ENCODE measurements at regions of chr20 and their contacts with region 1.

Region 1: GRCh38 chr20:62010551-62011402 is 54.9 kb downstream of the TAF4 start:
- DNase-seq: peak; percentile 63 to 70 (median 68)
- H3K4me3 ChIP-seq: no peak overlapping the region
- H3K4me3 Mint-ChIP-seq: peak overlapping the region in 1 of 8 donors; percentile 3
- H3K27ac ChIP-seq: no peak overlapping the region
- H3K27ac Mint-ChIP-seq: peak overlapping the region in 5 of 7 donors; percentile 4 to 76 (median 51)
- H3K4me1 ChIP-seq: no peaks in the 10 kb centered on the region
- H3K4me1 Mint-ChIP-seq: peaks cover 7 to 14% (median 9%) of the 10 kb centered on the region in 4 donors
- H3K27me3 ChIP-seq: no peaks in the 10 kb centered on the region
- H3K27me3 Mint-ChIP-seq: no peaks in the 10 kb centered on the region

Region 2: DNA sequence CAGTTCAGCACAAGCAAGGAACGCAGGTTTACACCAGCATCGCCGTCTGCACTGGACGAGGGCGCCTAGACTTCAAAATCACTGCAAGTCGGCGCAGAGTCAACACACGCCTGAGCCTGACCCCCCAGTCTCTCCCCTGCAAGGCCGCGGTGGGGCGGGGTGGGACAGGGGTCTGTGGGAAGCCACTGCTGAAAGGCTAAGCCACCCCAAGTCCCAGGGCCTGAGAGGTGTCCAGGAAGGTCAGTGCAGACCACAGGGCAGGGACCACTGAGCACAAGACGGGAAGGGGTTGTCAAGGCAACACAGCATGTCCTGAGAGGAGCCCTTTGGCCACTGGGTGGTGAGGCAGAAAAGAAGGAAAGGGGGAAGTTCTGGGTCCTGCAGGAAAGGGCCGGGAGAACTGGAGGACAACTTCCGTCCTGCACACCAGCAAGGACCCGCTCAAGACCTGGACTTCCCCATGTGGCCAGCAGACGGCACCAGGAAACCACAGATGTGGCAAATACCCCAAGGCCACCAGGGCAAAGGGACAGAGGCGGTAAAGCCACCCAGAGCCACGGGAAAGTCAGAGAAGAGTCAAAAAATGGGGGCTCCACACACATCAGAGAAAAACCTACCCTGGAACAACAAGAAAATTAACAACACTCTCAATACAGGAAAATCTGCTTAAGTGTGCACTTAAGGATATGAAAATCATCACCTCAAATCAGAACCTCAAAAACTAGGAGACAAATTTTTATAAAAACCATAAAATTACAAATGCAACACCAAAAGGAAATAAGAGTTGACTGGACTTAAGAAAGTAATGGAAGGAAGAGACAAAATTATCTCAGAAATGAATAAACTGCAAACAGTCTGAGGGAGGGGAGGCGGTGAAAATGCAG is 29.8 kb before region 1 on chr20:
- CTCF ChIA-PET with region 1: no interaction called
- POLR2A ChIA-PET with region 1: no interaction called
- intact Hi-C with region 1: no loop called
- DNase-seq: no peak
- H3K4me3 ChIP-seq: no peak overlapping the region
- H3K4me3 Mint-ChIP-seq: peak overlapping the region in 2 of 8 donors; percentile 44 to 67
- H3K27ac ChIP-seq: no peak overlapping the region
- H3K27ac Mint-ChIP-seq: peak overlapping the region in 3 of 7 donors; percentile 35 to 75 (median 42)
- H3K4me1 ChIP-seq: no peaks in the 10 kb centered on the region
- H3K4me1 Mint-ChIP-seq: peaks cover 8 to 38% (median 18%) of the 10 kb centered on the region in 4 donors
- H3K27me3 ChIP-seq: no peaks in the 10 kb centered on the region
- H3K27me3 Mint-ChIP-seq: no peaks in the 10 kb centered on the region

Region 3: GRCh38 chr20:61998343-61999121 is 12.2 kb before region 1 on chr20:
- CTCF ChIA-PET with region 1: no interaction called
- POLR2A ChIA-PET with region 1: no interaction called
- intact Hi-C with region 1: no loop called
- DNase-seq: no peak
- H3K4me3 ChIP-seq: no peak overlapping the region
- H3K4me3 Mint-ChIP-seq: no peak overlapping the region
- H3K27ac ChIP-seq: no peak overlapping the region
- H3K27ac Mint-ChIP-seq: no peak overlapping the region
- H3K4me1 ChIP-seq: no peaks in the 10 kb centered on the region
- H3K4me1 Mint-ChIP-seq: no peaks in the 10 kb centered on the region
- H3K27me3 ChIP-seq: no peaks in the 10 kb centered on the region
- H3K27me3 Mint-ChIP-seq: no peaks in the 10 kb centered on the region

Region 4: GRCh38 chr20:62156592-62157386 is 146.0 kb after region 1 on chr20:
- CTCF ChIA-PET with region 1: interaction called, 11 read pairs
- POLR2A ChIA-PET with region 1: no interaction called
- intact Hi-C with region 1: loop called (anchors 1 kb)
- DNase-seq: peak; percentile 67 to 71 (median 68)
- H3K4me3 ChIP-seq: no peak overlapping the region
- H3K4me3 Mint-ChIP-seq: no peak overlapping the region
- H3K27ac ChIP-seq: no peak overlapping the region
- H3K27ac Mint-ChIP-seq: no peak overlapping the region
- H3K4me1 ChIP-seq: peaks cover 12% of the 10 kb centered on the region
- H3K4me1 Mint-ChIP-seq: peaks cover 7 to 21% (median 15%) of the 10 kb centered on the region in 4 donors
- H3K27me3 ChIP-seq: no peaks in the 10 kb centered on the region
- H3K27me3 Mint-ChIP-seq: no peaks in the 10 kb centered on the region

Measured in CD4-positive, alpha-beta memory T cell (primary cell).